ENCODE measurements at regions of chr1 and their contacts with region 1.

Region 1: DNA sequence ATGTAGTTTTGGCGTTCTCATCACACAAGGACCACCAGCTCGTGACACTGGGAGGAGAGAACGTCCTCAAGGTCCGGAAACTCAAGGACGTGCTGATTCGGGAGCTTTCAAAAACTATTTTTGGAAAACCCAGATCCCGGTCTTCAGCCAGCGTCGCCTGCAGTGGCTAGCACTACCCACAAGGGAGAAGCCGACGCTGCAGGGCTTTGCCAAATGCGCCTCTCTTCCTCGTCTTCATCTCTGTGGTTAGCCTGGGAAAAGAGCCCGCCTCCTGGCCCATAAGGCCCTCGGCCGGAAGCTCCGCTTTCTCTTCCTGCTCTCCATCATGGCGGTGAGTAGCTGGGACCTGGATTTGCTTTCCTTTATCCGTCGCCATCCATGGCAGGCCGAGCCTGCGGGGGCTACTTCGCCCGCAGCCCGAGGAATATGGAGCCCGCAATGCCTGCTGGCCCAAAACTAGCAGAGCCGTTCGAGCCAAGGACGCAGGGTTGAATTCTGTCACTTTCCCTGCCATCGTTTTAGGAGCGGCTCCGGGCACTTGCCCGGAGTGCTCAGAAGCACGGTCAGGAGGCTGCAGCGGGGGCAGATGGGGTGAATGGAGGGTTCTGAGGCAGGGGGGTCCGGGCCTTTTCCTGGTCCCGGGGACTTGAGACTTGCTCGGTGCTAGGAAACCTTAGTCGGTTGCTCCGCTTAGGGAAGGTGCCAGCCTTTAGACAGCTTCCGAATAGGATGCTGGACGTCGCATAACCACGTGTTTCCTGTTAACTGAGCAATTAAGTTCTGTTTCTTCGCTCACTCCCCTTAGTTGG is at the start of gene RPL11:
- DNase-seq: peak; percentile 90 to 95 (median 91)
- H3K4me3 ChIP-seq: peak within 1 kb of the TSS; percentile 77 to 95 (median 90)
- H3K4me3 Mint-ChIP-seq: peak within 1 kb of the TSS; percentile 92 to 97
- H3K27ac ChIP-seq: peak within 1 kb of the TSS; percentile 84 to 93
- H3K27ac Mint-ChIP-seq: peak within 1 kb of the TSS; percentile 91 to 97 (median 95)
- H3K4me1 ChIP-seq: peaks cover 16 to 22% of the 10 kb centered on the region in 2 donors
- H3K4me1 Mint-ChIP-seq: peaks cover 44% of the 10 kb centered on the region
- H3K27me3 ChIP-seq: no peaks in the 10 kb centered on the region
- H3K27me3 Mint-ChIP-seq: peaks cover 2 to 3% (median 3%) of the 10 kb centered on the region in 3 donors
- CTCF ChIP-seq: peak; percentile 83
- polyA plus RNA-seq, gene RPL11: 542 to 923 (median 552) TPM

Region 2: GRCh38 chr1:23478896-23479665 is 212.6 kb before region 1 on chr1:
- intact Hi-C with region 1: no loop called
- DNase-seq: no peak
- H3K4me3 ChIP-seq: no peak overlapping the region
- H3K4me3 Mint-ChIP-seq: no peak overlapping the region
- H3K27ac ChIP-seq: no peak overlapping the region
- H3K27ac Mint-ChIP-seq: no peak overlapping the region
- H3K4me1 ChIP-seq: peaks cover 7 to 11% of the 10 kb centered on the region in 2 donors
- H3K4me1 Mint-ChIP-seq: peaks cover 9% of the 10 kb centered on the region
- H3K27me3 ChIP-seq: peaks cover 27 to 36% of the 10 kb centered on the region in 2 donors
- H3K27me3 Mint-ChIP-seq: peaks cover 40 to 47% (median 44%) of the 10 kb centered on the region in 3 donors
- CTCF ChIP-seq: no peak

Region 3: DNA sequence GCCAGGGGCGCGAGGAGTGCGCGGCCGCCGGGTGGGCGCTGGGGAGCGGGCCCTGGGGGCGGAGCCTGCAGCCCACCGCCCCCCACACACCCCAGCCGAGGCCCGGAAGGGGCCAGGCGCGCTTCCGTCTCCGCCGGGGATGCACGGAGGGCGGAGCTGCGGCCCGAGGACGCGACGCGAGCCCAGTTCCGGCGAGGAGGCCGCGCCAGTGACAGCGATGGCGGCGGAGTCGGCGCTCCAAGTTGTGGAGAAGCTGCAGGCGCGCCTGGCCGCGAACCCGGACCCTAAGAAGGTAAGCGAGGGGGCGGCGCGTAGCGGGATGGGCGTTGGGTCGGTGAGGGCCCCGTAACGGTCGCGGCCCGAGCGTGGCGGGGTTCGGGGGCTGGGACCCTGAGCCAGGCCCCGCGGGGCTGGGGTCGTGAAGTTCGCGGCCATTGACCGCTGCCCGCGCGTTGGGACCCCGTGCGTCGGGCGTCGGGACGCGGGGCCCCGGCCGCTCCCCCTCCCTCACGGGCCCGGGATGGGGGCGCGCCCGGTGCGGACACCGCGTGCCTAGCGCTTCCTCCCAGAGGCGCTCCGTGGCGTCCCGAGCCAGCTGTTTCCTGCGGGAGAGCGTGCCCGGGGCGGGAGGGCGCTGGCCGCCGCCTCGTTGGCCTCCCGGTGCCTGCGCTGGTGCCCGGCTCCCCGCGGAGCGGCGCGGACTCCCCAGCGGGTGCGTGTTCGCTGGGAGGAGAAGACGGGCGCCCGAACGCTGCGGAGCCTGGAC is 51.8 kb after region 1 on chr1 and contains the start of gene ELOA:
- intact Hi-C with region 1: loop called in 1 of 2 experiments (anchors 5 kb)
- DNase-seq: peak; percentile 53
- H3K4me3 ChIP-seq: peak within 1 kb of the TSS; percentile 67 to 93 (median 82)
- H3K4me3 Mint-ChIP-seq: peak within 1 kb of the TSS; percentile 93
- H3K27ac ChIP-seq: peak within 1 kb of the TSS; percentile 44 to 88
- H3K27ac Mint-ChIP-seq: peak within 1 kb of the TSS; percentile 80 to 91 (median 85)
- H3K4me1 ChIP-seq: peaks cover 16 to 27% of the 10 kb centered on the region in 2 donors
- H3K4me1 Mint-ChIP-seq: peaks cover 35% of the 10 kb centered on the region
- H3K27me3 ChIP-seq: no peaks in the 10 kb centered on the region
- H3K27me3 Mint-ChIP-seq: peaks cover 0 to 3% (median 2%) of the 10 kb centered on the region in 3 donors
- CTCF ChIP-seq: no peak
- polyA plus RNA-seq, gene ELOA: 25.4 to 31.2 (median 28.7) TPM

Region 4: GRCh38 chr1:23751050-23751814 is 59.5 kb after region 1 on chr1:
- intact Hi-C with region 1: loop called in 1 of 2 experiments (anchors 5 kb)
- DNase-seq: peak in 2 of 3 donors; percentile 12 to 34
- H3K4me3 ChIP-seq: no peak overlapping the region
- H3K4me3 Mint-ChIP-seq: no peak overlapping the region
- H3K27ac ChIP-seq: peak overlapping the region in 1 of 2 donors; percentile 6
- H3K27ac Mint-ChIP-seq: peak overlapping the region in 4 of 7 donors; percentile 4 to 73 (median 60)
- H3K4me1 ChIP-seq: no peaks in the 10 kb centered on the region
- H3K4me1 Mint-ChIP-seq: peaks cover 13% of the 10 kb centered on the region
- H3K27me3 ChIP-seq: no peaks in the 10 kb centered on the region
- H3K27me3 Mint-ChIP-seq: peaks cover 0 to 2% (median 0%) of the 10 kb centered on the region in 3 donors
- CTCF ChIP-seq: peak; percentile 80